B cell (primary cell): ENCODE measurements at regions of chrX and their contacts with region 1.

Region 1: DNA sequence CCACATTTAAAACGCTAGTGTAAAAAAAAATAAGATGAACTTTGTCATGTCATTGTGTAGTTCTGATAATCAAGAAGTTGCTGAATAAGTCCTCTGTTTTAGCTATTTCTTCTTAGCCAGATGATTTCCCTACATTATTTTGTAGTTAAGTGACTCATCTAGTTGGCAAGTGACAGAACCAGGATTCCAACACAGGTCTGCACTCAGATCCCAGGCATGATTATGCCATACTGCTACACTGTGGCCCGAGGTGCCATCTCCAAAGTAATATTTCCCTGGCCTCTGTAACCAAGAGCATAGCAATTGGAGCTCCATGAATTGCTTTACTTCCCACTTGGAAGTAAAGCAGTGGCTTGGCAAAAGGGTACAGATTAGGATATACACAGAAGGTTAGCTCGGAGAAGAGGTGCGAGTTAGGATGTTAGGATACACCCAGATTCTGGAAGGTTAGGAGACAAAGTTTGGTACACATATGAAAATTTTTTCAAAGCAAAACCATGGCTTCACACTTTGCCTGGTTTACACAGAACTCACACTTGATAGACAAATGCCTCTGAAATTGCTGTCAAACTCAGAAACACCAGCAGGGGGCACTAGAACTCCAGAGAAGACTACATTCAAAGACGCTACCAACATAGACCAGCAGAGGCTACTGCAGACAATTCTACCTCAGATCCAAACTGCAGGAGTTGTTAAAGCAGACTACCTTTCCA is 41.4 kb downstream of the SRPX2 start:
- DNase-seq: peak; percentile 81
- ATAC-seq: peak; percentile 72
- H3K4me3 ChIP-seq: no peak overlapping the region
- H3K4me3 Mint-ChIP-seq: peak overlapping the region; percentile 32
- H3K27ac ChIP-seq: no peak overlapping the region
- H3K27ac Mint-ChIP-seq: no peak overlapping the region
- H3K4me1 ChIP-seq: peaks cover 28 to 30% of the 10 kb centered on the region in 2 donors
- H3K4me1 Mint-ChIP-seq: peaks cover 34% of the 10 kb centered on the region
- H3K27me3 ChIP-seq: no peaks in the 10 kb centered on the region
- H3K27me3 Mint-ChIP-seq: no peaks in the 10 kb centered on the region
- CTCF ChIP-seq: peak; percentile 78

Region 2: DNA sequence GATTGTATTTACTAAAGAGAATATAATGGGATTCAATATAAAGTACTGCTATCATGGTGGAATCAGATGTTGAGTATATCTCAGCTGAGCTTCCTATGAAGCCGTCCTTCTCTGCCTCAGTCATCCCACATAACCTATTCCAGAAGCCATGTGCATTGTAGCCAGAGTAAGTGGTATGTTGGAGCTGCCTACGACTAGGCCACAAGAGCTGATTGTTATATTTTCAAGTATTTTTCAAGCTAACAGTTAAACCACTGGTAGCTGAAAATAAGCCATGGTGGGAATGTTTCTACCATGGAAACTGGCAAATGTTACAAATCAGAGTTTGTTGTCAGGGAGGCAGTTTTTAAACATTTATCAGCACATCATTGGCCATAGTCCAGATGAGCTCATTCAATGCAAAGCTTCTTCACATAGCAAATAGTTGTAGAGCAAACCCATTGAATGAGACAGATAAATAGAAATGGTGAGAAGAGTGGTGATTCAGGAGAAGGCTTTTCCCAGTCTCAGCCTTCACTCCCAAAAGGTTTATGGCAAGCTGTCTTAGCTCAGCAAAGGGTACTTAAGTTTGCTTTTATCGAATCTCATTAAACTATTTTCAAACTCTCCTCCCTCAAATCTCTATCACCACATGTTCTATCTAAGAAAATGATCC is 711.7 kb before region 1 on chrX:
- CTCF ChIA-PET with region 1: no interaction called
- POLR2A ChIA-PET with region 1: no interaction called
- intact Hi-C with region 1: no loop called
- DNase-seq: no peak
- ATAC-seq: no peak
- H3K4me3 ChIP-seq: no peak overlapping the region
- H3K4me3 Mint-ChIP-seq: no peak overlapping the region
- H3K27ac ChIP-seq: no peak overlapping the region
- H3K27ac Mint-ChIP-seq: no peak overlapping the region
- H3K4me1 ChIP-seq: no peaks in the 10 kb centered on the region
- H3K4me1 Mint-ChIP-seq: no peaks in the 10 kb centered on the region
- H3K27me3 ChIP-seq: no peaks in the 10 kb centered on the region
- H3K27me3 Mint-ChIP-seq: no peaks in the 10 kb centered on the region
- CTCF ChIP-seq: no peak

Region 3: DNA sequence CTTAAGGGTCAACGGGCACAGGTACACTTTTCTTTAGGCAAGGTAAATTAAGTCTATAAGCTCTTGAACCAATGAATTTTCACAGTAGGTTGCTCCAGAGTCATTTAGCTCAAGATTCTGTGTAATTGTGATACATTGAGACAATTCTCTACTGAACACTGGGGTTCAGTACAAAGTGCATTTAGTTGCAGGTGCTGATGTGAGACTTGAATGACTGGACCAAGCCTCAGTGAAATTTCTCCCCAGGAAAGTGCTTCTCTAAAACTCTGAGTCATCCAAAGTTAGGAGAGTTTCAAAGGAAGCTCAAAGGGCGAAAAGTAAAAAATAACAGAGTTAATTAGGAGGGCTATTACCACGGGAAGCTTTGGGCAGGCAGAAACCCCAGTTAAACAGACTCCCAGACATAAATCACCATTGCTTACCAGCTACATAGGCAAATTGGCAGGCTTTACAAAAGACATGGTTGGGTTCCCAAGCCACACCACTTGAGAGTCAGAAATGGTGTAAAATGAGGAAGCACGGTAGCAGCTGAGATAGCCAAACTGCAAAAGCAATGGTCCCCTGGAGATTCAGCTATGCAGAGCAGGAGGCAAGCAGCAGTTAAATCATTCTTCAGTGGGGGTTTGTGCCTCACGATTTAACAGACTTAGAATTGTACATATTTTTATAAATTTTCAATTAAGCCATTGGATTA is 478.0 kb before region 1 on chrX:
- CTCF ChIA-PET with region 1: no interaction called
- POLR2A ChIA-PET with region 1: no interaction called
- intact Hi-C with region 1: no loop called
- DNase-seq: no peak
- ATAC-seq: no peak
- H3K4me3 ChIP-seq: no peak overlapping the region
- H3K4me3 Mint-ChIP-seq: no peak overlapping the region
- H3K27ac ChIP-seq: no peak overlapping the region
- H3K27ac Mint-ChIP-seq: no peak overlapping the region
- H3K4me1 ChIP-seq: no peaks in the 10 kb centered on the region
- H3K4me1 Mint-ChIP-seq: no peaks in the 10 kb centered on the region
- H3K27me3 ChIP-seq: no peaks in the 10 kb centered on the region
- H3K27me3 Mint-ChIP-seq: no peaks in the 10 kb centered on the region
- CTCF ChIP-seq: no peak

Region 4: GRCh38 chrX:100512471-100512870 is 173.0 kb before region 1 on chrX:
- CTCF ChIA-PET with region 1: interaction called, 6 read pairs
- POLR2A ChIA-PET with region 1: no interaction called
- intact Hi-C with region 1: loop called (anchors 1 kb)
- DNase-seq: peak; percentile 31
- ATAC-seq: no peak
- H3K4me3 ChIP-seq: no peak overlapping the region
- H3K4me3 Mint-ChIP-seq: no peak overlapping the region
- H3K27ac ChIP-seq: no peak overlapping the region
- H3K27ac Mint-ChIP-seq: no peak overlapping the region
- H3K4me1 ChIP-seq: no peaks in the 10 kb centered on the region
- H3K4me1 Mint-ChIP-seq: no peaks in the 10 kb centered on the region
- H3K27me3 ChIP-seq: no peaks in the 10 kb centered on the region
- H3K27me3 Mint-ChIP-seq: peaks cover 3% of the 10 kb centered on the region
- CTCF ChIP-seq: peak; percentile 82

Region 5: DNA sequence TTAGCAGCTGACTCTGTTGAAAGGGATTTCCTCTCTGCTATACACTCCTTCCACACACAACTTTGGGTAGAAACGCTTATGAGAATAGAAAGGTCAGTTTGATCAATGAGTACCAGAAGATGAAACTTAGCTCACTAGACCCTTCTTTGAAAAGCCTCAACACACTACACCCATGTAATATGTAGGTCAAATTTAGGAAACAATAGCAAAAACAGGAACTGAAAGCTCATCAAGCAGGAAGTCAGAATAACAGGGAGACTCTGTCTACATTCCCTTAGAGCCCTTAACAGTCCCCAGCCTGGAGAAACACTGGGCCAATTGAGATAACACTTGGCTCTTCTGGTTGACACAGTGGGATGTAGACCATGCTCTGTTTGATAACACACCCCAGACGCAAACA is 10.7 kb before region 1 on chrX:
- CTCF ChIA-PET with region 1: interaction called, 53 read pairs
- POLR2A ChIA-PET with region 1: no interaction called
- intact Hi-C with region 1: no loop called
- DNase-seq: peak; percentile 29
- ATAC-seq: peak; percentile 33
- H3K4me3 ChIP-seq: no peak overlapping the region
- H3K4me3 Mint-ChIP-seq: no peak overlapping the region
- H3K27ac ChIP-seq: no peak overlapping the region
- H3K27ac Mint-ChIP-seq: no peak overlapping the region
- H3K4me1 ChIP-seq: peaks cover 16% of the 10 kb centered on the region in 2 donors
- H3K4me1 Mint-ChIP-seq: peaks cover 13% of the 10 kb centered on the region
- H3K27me3 ChIP-seq: peaks cover 0 to 2% (median 0%) of the 10 kb centered on the region in 4 experiments
- H3K27me3 Mint-ChIP-seq: no peaks in the 10 kb centered on the region
- CTCF ChIP-seq: no peak

Region 6: DNA sequence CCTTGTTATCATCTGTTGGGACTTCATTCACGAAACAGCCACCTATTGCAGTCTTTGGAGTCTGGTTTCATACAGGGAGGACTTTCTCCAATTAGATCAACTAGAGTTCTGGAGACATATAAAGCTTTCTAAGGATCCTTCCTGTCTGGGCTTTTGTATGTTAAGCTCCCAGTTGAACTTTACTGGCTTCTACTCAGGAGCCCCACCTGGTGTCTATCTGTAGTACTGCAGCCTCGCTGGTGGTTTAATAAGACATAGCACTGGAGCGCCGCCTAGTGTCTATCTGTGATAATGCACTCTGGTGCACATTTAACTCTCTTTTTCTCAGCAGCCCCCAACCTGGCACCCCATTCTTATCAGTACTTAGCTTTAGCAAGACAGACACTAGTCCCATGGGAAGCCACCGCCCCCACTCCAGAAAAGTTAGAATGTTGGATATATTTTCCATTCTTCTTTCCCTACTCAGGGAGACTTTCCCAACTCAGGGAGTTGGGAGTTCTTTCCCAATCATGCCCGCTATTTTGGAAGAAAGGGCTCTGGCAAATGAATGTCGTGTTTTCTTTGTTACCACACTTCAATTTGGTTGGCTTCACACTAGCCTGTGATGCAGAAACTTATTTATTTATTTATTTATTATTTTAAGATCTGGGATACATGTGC is 83.4 kb after region 1 on chrX:
- CTCF ChIA-PET with region 1: interaction called, 171 read pairs
- POLR2A ChIA-PET with region 1: no interaction called
- intact Hi-C with region 1: loop called (anchors 1 kb)
- DNase-seq: peak; percentile 80
- ATAC-seq: peak; percentile 100
- H3K4me3 ChIP-seq: no peak overlapping the region
- H3K4me3 Mint-ChIP-seq: no peak overlapping the region
- H3K27ac ChIP-seq: no peak overlapping the region
- H3K27ac Mint-ChIP-seq: no peak overlapping the region
- H3K4me1 ChIP-seq: no peaks in the 10 kb centered on the region
- H3K4me1 Mint-ChIP-seq: no peaks in the 10 kb centered on the region
- H3K27me3 ChIP-seq: peaks cover 0 to 2% (median 0%) of the 10 kb centered on the region in 4 experiments
- H3K27me3 Mint-ChIP-seq: peaks cover 9% of the 10 kb centered on the region
- CTCF ChIP-seq: peak; percentile 96

Region 7: GRCh38 chrX:100895365-100896075 is 210.1 kb after region 1 on chrX:
- CTCF ChIA-PET with region 1: no interaction called
- POLR2A ChIA-PET with region 1: no interaction called
- intact Hi-C with region 1: no loop called
- DNase-seq: peak; percentile 41
- ATAC-seq: no peak
- H3K4me3 ChIP-seq: no peak overlapping the region
- H3K4me3 Mint-ChIP-seq: no peak overlapping the region
- H3K27ac ChIP-seq: no peak overlapping the region
- H3K27ac Mint-ChIP-seq: no peak overlapping the region
- H3K4me1 ChIP-seq: no peaks in the 10 kb centered on the region
- H3K4me1 Mint-ChIP-seq: peaks cover 9% of the 10 kb centered on the region
- H3K27me3 ChIP-seq: no peaks in the 10 kb centered on the region
- H3K27me3 Mint-ChIP-seq: no peaks in the 10 kb centered on the region
- CTCF ChIP-seq: peak; percentile 39

Region 8: DNA sequence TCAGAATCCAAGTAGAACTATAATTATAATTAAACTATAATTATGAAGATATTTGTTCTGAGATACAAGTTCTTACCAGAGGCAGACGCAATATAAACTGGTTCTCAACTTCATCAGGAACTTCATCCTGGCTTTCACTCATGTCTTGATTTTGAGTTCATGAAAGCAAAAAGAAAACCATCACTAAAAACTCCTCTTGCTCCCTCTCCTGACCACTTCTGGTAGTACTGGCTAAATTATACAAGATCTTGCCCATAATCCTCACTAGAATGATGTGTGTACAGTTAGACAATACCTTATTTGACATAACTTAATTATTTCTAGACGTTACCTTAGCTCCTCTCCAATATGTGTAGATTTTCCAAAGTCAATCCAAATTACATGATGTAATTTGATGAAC is 602.0 kb after region 1 on chrX:
- CTCF ChIA-PET with region 1: no interaction called
- POLR2A ChIA-PET with region 1: no interaction called
- intact Hi-C with region 1: loop called (anchors 2 kb)
- DNase-seq: peak; percentile 51
- ATAC-seq: peak; percentile 47
- H3K4me3 ChIP-seq: no peak overlapping the region
- H3K4me3 Mint-ChIP-seq: no peak overlapping the region
- H3K27ac ChIP-seq: no peak overlapping the region
- H3K27ac Mint-ChIP-seq: no peak overlapping the region
- H3K4me1 ChIP-seq: no peaks in the 10 kb centered on the region
- H3K4me1 Mint-ChIP-seq: no peaks in the 10 kb centered on the region
- H3K27me3 ChIP-seq: peaks cover 0 to 3% (median 0%) of the 10 kb centered on the region in 4 experiments
- H3K27me3 Mint-ChIP-seq: peaks cover 2% of the 10 kb centered on the region
- CTCF ChIP-seq: peak; percentile 64